GM12878 (cell line): ENCODE measurements at regions of chr6 and their contacts with region 1.

Region 1: GRCh38 chr6:61886608-61887259 is 399.3 kb downstream of the KHDRBS2 start:
- DNase-seq: no peak
- ATAC-seq: peak; percentile 58; the same call in 2 of the 3 replicates
- H3K4me3 ChIP-seq: no peak overlapping the region
- H3K27ac ChIP-seq: no peak overlapping the region
- H3K4me1 ChIP-seq: no peaks in the 10 kb centered on the region
- H3K27me3 ChIP-seq: no peaks in the 10 kb centered on the region
- CTCF ChIP-seq: peak in 1 of 3 experiments; percentile 11; a peak in 1 of 6 replicates
- EP300 ChIP-seq: no peak
- POLR2A ChIP-seq: no peak
- RAD21 ChIP-seq: no peak

Region 2: GRCh38 chr6:61909486-61909885 is 22.8 kb after region 1 on chr6:
- CTCF ChIA-PET with region 1: no interaction called
- POLR2A ChIA-PET with region 1: no interaction called
- RAD21 ChIA-PET with region 1: no interaction called
- SMC1A ChIA-PET with region 1: no interaction called
- in situ Hi-C with region 1: no loop called
- intact Hi-C with region 1: no loop called
- DNase-seq: no peak
- ATAC-seq: no peak
- H3K4me3 ChIP-seq: no peak overlapping the region
- H3K27ac ChIP-seq: no peak overlapping the region
- H3K4me1 ChIP-seq: no peaks in the 10 kb centered on the region
- H3K27me3 ChIP-seq: no peaks in the 10 kb centered on the region
- CTCF ChIP-seq: no peak
- EP300 ChIP-seq: no peak
- POLR2A ChIP-seq: no peak
- RAD21 ChIP-seq: no peak

Region 3: GRCh38 chr6:62150048-62150663 is 263.4 kb after region 1 on chr6:
- CTCF ChIA-PET with region 1: interaction called, 7 read pairs
- POLR2A ChIA-PET with region 1: no interaction called
- RAD21 ChIA-PET with region 1: no interaction called
- SMC1A ChIA-PET with region 1: no interaction called
- in situ Hi-C with region 1: no loop called
- intact Hi-C with region 1: loop called (anchors 1 kb)
- DNase-seq: no peak
- ATAC-seq: peak; percentile 69
- H3K4me3 ChIP-seq: no peak overlapping the region
- H3K27ac ChIP-seq: no peak overlapping the region
- H3K4me1 ChIP-seq: no peaks in the 10 kb centered on the region
- H3K27me3 ChIP-seq: no peaks in the 10 kb centered on the region
- CTCF ChIP-seq: peak; percentile 61 to 65 (median 64)
- EP300 ChIP-seq: no peak
- POLR2A ChIP-seq: no peak
- RAD21 ChIP-seq: peak; percentile 48

Region 4: DNA sequence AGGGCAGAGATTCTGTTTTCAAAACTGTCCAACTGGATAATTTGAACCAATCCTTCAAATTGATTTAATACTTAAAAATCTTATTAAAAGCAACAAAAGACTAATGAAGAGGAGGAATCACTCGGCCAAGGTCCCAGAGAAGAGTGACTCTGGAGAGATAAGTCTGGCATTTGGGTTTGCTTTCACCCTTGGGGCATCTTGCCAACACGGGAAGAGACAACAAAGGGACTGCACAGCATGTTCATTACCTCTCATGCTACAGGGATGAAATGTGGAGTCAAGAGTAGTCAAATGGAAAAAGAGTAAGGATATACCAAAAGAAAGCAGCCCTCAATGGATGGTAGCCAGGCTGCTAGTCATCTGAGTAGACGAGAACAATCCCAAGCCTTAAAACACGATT is 331.1 kb after region 1 on chr6:
- CTCF ChIA-PET with region 1: no interaction called
- POLR2A ChIA-PET with region 1: no interaction called
- RAD21 ChIA-PET with region 1: no interaction called
- SMC1A ChIA-PET with region 1: no interaction called
- in situ Hi-C with region 1: no loop called
- intact Hi-C with region 1: no loop called
- DNase-seq: no peak
- ATAC-seq: no peak
- H3K4me3 ChIP-seq: no peak overlapping the region
- H3K27ac ChIP-seq: no peak overlapping the region
- H3K4me1 ChIP-seq: no peaks in the 10 kb centered on the region
- H3K27me3 ChIP-seq: no peaks in the 10 kb centered on the region
- CTCF ChIP-seq: no peak
- EP300 ChIP-seq: no peak
- POLR2A ChIP-seq: no peak
- RAD21 ChIP-seq: no peak